Common myeloid progenitor, CD34-positive (primary cell): ENCODE measurements at regions of chr7 and their contacts with region 1.

Region 1: DNA sequence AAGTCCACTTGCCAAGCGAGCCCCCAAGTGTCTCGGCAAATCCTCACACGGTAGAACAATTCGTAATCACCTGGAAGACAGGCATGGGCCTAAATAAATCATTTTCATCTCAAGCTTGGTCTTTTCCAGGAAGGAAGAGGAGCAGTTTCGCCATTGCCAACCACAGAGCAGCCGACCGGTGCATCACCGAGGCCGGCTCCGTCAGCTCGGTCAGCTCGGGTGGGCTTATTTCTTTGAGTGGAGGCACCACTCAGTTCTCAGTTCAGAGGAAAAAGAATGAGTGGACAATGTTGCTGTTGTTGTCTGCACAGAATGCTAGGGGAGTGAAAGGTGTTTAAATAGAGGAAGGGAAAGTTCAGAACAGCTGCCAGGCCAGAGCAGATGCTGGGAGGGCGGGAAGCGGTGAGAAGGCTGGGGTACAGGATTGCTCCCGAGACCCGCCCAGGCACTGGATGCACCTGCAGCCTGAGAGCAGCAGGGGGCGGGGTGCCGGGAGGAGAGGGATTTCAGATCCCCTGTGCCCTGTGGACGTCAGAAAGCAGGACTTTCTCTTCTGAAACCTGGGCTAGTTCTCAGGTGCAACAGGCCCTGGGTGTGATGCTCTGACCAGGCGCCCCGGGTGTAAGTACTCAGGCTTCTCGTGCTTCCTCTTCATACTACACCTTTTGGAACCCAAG is 17.7 kb upstream of the IGFBP3 start:
- DNase-seq: no peak
- H3K4me3 ChIP-seq: no peak overlapping the region
- H3K27ac ChIP-seq: no peak overlapping the region
- H3K4me1 ChIP-seq: peaks cover 0 to 12% (median 10%) of the 10 kb centered on the region in 4 experiments
- H3K27me3 ChIP-seq: peaks cover 0 to 23% (median 5%) of the 10 kb centered on the region in 5 experiments

Region 2: DNA sequence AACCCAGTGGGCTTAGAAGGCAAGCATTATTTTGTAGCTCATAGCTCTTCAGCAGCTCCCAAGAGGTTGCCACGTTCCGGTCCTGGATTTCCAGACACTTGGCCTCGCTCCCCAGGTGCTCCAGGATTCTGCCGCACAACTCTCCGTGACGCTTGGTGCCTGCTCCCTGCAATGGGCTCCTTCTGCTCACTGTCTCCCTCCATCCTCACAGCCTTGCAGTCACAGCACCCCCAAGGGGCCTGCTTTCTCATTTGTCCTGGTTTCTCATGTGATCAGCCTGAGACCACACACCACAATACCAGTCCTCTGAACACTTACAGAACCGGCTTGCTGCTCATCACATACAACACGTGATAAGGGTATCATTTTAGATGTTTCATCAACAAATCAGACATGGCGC is 27.5 kb before region 1 on chr7:
- CTCF ChIA-PET with region 1: no interaction called
- POLR2A ChIA-PET with region 1: no interaction called
- DNase-seq: no peak
- H3K4me3 ChIP-seq: no peak overlapping the region
- H3K27ac ChIP-seq: no peak overlapping the region
- H3K4me1 ChIP-seq: no peaks in the 10 kb centered on the region
- H3K27me3 ChIP-seq: peaks cover 2 to 27% (median 9%) of the 10 kb centered on the region in 5 experiments

Region 3: DNA sequence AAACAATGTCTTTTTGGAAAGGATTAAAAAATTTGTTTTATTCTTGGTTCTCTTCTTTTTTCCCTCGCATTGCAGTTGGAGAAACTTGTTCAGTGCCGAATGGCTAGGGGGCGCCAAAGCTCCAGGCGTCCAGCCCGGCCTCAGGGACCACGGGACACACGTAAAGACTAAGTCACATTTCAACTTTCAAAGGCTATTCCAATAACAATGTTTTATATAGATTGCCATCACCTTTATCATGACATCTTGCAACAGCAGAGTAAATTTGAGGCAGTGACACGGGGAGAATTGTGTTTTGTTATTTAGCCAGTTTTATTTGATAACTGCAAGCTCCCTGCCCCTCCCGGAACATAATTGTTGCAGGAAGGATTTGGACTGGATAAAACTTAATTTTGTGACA is 15.5 kb before region 1 on chr7:
- CTCF ChIA-PET with region 1: interaction called, 22 read pairs
- POLR2A ChIA-PET with region 1: no interaction called
- DNase-seq: peak; percentile 59 to 79 (median 74)
- H3K4me3 ChIP-seq: peak overlapping the region in 1 of 7 experiments; percentile 45
- H3K27ac ChIP-seq: no peak overlapping the region
- H3K4me1 ChIP-seq: peaks cover 0 to 26% (median 17%) of the 10 kb centered on the region in 4 experiments
- H3K27me3 ChIP-seq: peaks cover 16 to 81% (median 48%) of the 10 kb centered on the region in 5 experiments